Activated CD8-positive, alpha-beta T cell treated with anti-CD3 and anti-CD28 coated beads, Interleukin-2, amount 10 ng/mL, durations not matched to agents 7 days and 5 days (primary cell): ENCODE measurements at regions of chr6 and their contacts with region 1.

Region 1: DNA sequence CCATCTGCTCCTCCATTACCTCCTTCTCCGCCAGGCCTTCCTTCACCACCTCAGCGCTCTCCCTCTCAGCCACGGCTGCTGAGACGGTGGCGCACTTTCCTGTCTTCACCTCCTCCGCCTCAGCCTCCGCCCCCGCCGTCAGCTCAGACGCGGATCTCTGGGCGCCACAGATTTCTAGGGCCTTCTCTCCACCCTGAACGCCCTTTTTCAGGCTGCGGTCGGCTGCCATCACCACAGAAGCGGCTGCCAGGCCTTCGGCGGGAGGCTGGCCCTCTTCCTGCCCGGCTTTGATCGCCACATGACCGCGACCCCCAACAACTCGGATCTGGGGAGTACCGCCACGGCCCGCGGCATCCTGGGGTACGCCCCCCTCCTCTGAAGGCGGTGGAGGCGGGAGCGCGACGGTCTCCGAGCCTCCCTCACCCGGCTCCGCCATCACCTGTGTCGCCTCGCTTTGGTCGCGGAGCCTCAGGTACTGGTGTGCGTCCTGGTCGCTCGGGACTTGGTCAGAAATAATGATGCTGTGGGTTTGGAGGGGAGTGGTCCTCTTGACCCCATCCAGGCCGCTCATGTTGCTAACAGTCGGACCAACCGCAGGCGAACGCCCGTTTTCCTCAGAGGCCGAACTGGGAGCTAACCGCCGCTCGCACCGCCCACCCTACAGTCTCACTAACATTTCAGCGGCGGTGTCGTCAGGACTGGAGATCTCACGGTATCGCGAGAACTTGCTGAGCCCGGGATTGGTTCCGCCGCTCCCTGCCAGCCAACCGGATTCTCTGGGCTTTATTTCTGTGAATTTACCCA is at the start of gene TSPYL1:
- DNase-seq: peak; percentile 97
- ATAC-seq: peak; percentile 89
- H3K4me3 Mint-ChIP-seq: peak within 1 kb of the TSS; percentile 96
- H3K27ac Mint-ChIP-seq: peak within 1 kb of the TSS; percentile 98
- H3K4me1 Mint-ChIP-seq: peaks cover 46% of the 10 kb centered on the region
- H3K27me3 Mint-ChIP-seq: no peaks in the 10 kb centered on the region
- total RNA-seq, gene TSPYL1: 37.8 to 38.4 TPM

Region 2: GRCh38 chr6:116047173-116047933 is 232.1 kb before region 1 on chr6:
- CTCF ChIA-PET with region 1: no interaction called
- POLR2A ChIA-PET with region 1: no interaction called
- DNase-seq: no peak
- ATAC-seq: no peak
- H3K4me3 Mint-ChIP-seq: no peak overlapping the region
- H3K27ac Mint-ChIP-seq: no peak overlapping the region
- H3K4me1 Mint-ChIP-seq: no peaks in the 10 kb centered on the region
- H3K27me3 Mint-ChIP-seq: peaks cover 6% of the 10 kb centered on the region

Region 3: DNA sequence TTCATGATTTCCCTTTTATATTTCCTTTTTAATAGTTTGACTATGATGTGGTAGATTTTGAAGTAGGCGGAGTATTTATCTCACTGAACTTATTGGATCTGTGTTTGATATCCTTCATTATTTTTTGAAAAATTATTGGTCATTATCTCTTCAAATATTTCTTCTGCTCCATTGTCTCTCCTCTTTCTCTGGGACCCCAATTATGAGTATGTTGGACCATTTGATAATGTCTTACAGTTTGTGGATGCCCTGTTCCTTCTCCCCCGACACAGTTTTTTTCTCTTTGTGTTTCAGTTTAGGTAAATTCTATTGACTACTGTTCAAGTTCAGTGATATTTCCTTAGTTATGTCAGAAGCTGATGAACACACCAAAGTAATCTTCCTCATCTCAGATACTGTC is 104.1 kb before region 1 on chr6:
- CTCF ChIA-PET with region 1: no interaction called
- POLR2A ChIA-PET with region 1: no interaction called
- DNase-seq: no peak
- ATAC-seq: no peak
- H3K4me3 Mint-ChIP-seq: no peak overlapping the region
- H3K27ac Mint-ChIP-seq: no peak overlapping the region
- H3K4me1 Mint-ChIP-seq: no peaks in the 10 kb centered on the region
- H3K27me3 Mint-ChIP-seq: no peaks in the 10 kb centered on the region

Region 4: GRCh38 chr6:116253505-116254296 is 25.8 kb before region 1 on chr6 and contains the start of gene TSPYL4:
- CTCF ChIA-PET with region 1: interaction called, 6 read pairs
- POLR2A ChIA-PET with region 1: interaction called, 51 read pairs
- DNase-seq: peak; percentile 94
- ATAC-seq: peak; percentile 93
- H3K4me3 Mint-ChIP-seq: no peak within 1 kb of the TSS
- H3K27ac Mint-ChIP-seq: no peak within 1 kb of the TSS
- H3K4me1 Mint-ChIP-seq: peaks cover 31% of the 10 kb centered on the region
- H3K27me3 Mint-ChIP-seq: no peaks in the 10 kb centered on the region
- total RNA-seq, gene TSPYL4: 19.3 to 19.8 TPM

Region 5: GRCh38 chr6:116268589-116269293 is 10.7 kb before region 1 on chr6:
- CTCF ChIA-PET with region 1: interaction called, 13 read pairs
- POLR2A ChIA-PET with region 1: interaction called, 13 read pairs
- DNase-seq: no peak
- ATAC-seq: peak; percentile 66
- H3K4me3 Mint-ChIP-seq: no peak overlapping the region
- H3K27ac Mint-ChIP-seq: no peak overlapping the region
- H3K4me1 Mint-ChIP-seq: peaks cover 3% of the 10 kb centered on the region
- H3K27me3 Mint-ChIP-seq: no peaks in the 10 kb centered on the region

Region 6: DNA sequence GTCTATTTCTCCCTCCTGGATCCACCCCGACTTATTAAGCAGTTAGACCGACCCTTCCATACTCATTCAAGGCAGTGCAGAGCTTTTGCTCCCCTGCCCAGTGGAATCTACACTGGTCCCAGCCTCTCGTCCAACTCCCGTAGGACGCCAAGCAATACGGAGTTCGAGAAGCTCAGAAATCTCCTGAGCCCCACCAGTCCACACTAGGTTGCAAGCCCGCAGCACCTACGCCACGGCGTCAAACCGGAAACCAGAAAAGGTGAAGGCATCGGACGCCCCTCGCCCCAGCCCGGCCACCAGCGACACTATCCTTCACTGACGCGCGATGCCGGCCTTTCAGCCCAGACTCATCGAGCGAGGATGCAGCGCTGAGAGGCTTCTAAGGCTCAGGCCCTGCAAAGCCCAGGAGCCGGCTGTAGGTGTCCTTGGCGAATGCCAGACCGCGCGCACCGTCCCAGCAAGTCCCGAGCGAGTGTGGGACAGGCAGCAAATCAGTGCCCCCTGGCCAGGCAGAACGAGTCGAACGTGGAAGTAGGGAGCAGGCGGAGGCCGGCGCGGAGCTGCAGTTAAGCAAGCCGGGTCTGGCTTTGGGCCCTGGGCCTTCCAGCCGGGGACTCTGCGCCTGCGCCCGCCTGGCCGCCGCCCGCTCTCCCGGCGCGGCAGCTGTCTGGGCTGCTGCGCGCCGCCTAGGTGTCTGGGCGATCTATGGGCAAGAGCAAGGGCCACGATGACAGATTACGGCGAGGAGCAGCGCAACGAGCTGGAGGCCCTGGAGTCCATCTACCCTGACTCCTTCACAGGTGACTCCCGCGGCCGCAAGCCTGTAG is 291.6 kb after region 1 on chr6 and contains the start of gene RWDD1:
- CTCF ChIA-PET with region 1: interaction called, 9 read pairs
- POLR2A ChIA-PET with region 1: interaction called, 27 read pairs
- DNase-seq: peak; percentile 99
- ATAC-seq: peak; percentile 96
- H3K4me3 Mint-ChIP-seq: peak within 1 kb of the TSS; percentile 98
- H3K27ac Mint-ChIP-seq: peak within 1 kb of the TSS; percentile 97
- H3K4me1 Mint-ChIP-seq: peaks cover 37% of the 10 kb centered on the region
- H3K27me3 Mint-ChIP-seq: peaks cover 5% of the 10 kb centered on the region
- total RNA-seq, gene RWDD1: 39.8 to 45.2 TPM